ENCODE measurements at regions of chr18 and their contacts with region 1.

Region 1: DNA sequence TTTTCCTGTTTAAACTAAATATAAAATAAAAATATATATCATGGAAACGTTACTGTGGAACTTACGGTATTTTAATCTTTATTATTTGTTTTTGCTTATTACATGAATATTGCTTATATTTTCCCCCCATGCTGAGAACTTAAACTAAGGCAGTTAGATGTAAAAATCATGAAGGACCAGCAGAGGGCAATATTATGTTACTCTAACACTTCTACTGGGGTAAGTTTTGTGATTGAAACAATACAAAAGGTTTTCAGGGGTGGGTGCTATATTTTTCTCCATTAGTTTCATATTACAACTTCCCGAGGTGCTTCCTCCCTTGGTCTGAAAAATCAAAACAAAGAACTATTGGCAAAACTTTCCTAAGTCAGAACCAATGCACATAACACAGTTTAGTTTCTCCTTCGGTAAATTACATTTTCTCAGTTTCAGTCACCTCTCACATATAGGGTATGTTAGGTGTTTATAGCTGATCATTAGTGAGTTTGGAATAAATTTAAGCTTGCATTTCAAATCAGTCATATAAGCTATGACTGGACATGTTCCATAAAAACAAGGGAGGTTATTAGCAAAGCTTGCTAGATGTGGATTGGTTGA is 54.8 kb downstream of the ZNF407 start:
- DNase-seq: peak; percentile 66
- ATAC-seq: peak; percentile 75
- H3K4me3 ChIP-seq: no peak overlapping the region
- H3K27ac ChIP-seq: no peak overlapping the region
- H3K4me1 ChIP-seq: peaks cover 6% of the 10 kb centered on the region
- H3K27me3 ChIP-seq: no peaks in the 10 kb centered on the region
- CTCF ChIP-seq: peak; percentile 73
- POLR2A ChIP-seq: no peak
- RAD21 ChIP-seq: peak; percentile 77

Region 2: DNA sequence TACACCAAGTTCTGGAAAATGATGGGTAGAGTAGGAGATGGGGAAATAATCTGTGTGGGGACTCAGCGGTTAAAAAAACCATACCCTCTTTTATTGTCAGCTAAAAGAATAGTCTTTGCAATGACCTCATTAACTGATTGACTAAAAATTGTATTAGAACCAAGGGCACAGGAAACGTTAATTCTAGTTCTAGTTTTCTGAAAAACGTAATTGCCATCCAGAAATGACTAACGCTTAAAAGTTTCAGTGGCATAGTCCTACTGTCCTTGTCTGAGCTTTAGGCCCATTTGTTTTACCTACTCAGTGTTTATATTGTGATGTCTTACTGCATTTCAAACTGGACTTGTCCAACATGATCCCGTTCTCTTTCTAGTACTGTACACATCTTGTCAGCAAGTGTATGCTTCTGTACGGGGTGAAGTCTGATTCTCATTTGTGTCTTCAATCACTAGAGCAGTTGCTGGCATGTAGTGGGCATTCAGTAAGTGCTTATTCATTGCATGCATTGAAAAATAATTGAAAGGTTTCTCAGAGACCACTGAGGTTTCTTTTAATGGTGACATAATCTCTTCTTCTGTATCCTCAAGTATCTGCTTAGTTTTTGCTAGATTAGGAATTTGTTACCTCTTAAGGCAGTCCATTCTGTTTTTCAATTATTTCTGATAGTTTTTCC is 26.7 kb after region 1 on chr18:
- CTCF ChIA-PET with region 1: no interaction called
- POLR2A ChIA-PET with region 1: no interaction called
- dilution Hi-C with region 1: no loop called
- in situ Hi-C with region 1: no loop called
- intact Hi-C with region 1: no loop called
- DNase-seq: no peak
- ATAC-seq: no peak
- H3K4me3 ChIP-seq: no peak overlapping the region
- H3K27ac ChIP-seq: no peak overlapping the region
- H3K4me1 ChIP-seq: 0 out of 2 replicates have a peak, but pooled peaks cover 2% of the 10 kb centered on the region
- H3K27me3 ChIP-seq: no peaks in the 10 kb centered on the region
- CTCF ChIP-seq: no peak
- POLR2A ChIP-seq: no peak
- RAD21 ChIP-seq: no peak

Region 3: GRCh38 chr18:74880706-74881278 is 228.3 kb after region 1 on chr18:
- CTCF ChIA-PET with region 1: no interaction called
- POLR2A ChIA-PET with region 1: no interaction called
- dilution Hi-C with region 1: no loop called
- in situ Hi-C with region 1: no loop called
- intact Hi-C with region 1: no loop called
- DNase-seq: no peak
- ATAC-seq: no peak
- H3K4me3 ChIP-seq: no peak overlapping the region
- H3K27ac ChIP-seq: no peak overlapping the region
- H3K4me1 ChIP-seq: no peaks in the 10 kb centered on the region
- H3K27me3 ChIP-seq: no peaks in the 10 kb centered on the region
- CTCF ChIP-seq: no peak
- POLR2A ChIP-seq: no peak
- RAD21 ChIP-seq: no peak

Region 4: GRCh38 chr18:74963820-74964446 is 311.4 kb after region 1 on chr18:
- CTCF ChIA-PET with region 1: no interaction called
- POLR2A ChIA-PET with region 1: no interaction called
- dilution Hi-C with region 1: no loop called
- in situ Hi-C with region 1: no loop called
- intact Hi-C with region 1: loop called (anchors 1 kb)
- DNase-seq: peak; percentile 56
- ATAC-seq: peak; percentile 69
- H3K4me3 ChIP-seq: no peak overlapping the region
- H3K27ac ChIP-seq: no peak overlapping the region
- H3K4me1 ChIP-seq: no peaks in the 10 kb centered on the region
- H3K27me3 ChIP-seq: no peaks in the 10 kb centered on the region
- CTCF ChIP-seq: peak; percentile 51
- POLR2A ChIP-seq: no peak
- RAD21 ChIP-seq: peak; percentile 52

Region 5: DNA sequence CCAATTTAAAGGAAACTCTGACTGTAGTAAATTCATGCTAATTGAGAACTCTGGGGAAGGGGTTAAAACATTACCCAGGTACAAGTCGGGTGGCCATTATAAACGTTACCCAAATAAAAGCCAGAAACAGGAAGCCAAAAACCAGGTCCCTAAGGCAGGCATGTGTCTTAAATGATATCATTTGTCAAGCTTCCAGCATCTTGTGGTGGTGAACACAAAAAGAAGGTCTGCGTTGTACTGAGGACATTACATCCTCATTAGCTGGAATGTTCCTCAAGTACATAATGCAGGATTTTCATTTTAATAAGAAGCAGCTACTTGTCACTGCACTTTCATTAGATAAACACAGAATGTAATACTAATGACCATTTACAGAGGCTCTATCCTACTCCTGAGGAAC is 545.5 kb after region 1 on chr18:
- CTCF ChIA-PET with region 1: no interaction called
- POLR2A ChIA-PET with region 1: no interaction called
- dilution Hi-C with region 1: no loop called
- in situ Hi-C with region 1: loop called (anchors 5 kb)
- intact Hi-C with region 1: no loop called
- DNase-seq: peak; percentile 27
- ATAC-seq: no peak
- H3K4me3 ChIP-seq: no peak overlapping the region
- H3K27ac ChIP-seq: no peak overlapping the region
- H3K4me1 ChIP-seq: peaks cover 7% of the 10 kb centered on the region
- H3K27me3 ChIP-seq: no peaks in the 10 kb centered on the region
- CTCF ChIP-seq: no peak
- POLR2A ChIP-seq: no peak
- RAD21 ChIP-seq: no peak

Region 6: DNA sequence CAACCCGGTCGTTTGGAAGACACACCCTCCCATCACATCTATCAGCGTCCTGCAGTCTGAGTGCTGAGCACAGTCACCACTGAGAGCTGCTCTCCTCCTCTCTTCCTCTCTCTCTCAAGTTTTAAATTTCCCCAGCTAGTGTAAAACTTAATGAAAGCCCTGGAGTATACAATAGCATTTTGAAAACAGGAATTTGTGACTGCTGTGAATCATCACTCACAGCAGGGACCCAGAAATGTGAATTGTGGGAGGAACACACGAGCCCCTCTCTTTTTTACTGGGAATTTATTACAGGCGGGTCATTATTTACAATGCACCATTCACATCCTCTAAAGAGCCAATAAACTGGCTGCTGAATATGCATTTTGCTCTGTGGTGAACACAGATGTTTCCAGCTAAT is 960.0 kb after region 1 on chr18:
- CTCF ChIA-PET with region 1: no interaction called
- POLR2A ChIA-PET with region 1: no interaction called
- dilution Hi-C with region 1: no loop called
- in situ Hi-C with region 1: no loop called
- intact Hi-C with region 1: loop called (anchors 10 kb)
- DNase-seq: no peak
- ATAC-seq: no peak
- H3K4me3 ChIP-seq: no peak overlapping the region
- H3K27ac ChIP-seq: no peak overlapping the region
- H3K4me1 ChIP-seq: no peaks in the 10 kb centered on the region
- H3K27me3 ChIP-seq: no peaks in the 10 kb centered on the region
- CTCF ChIP-seq: no peak
- POLR2A ChIP-seq: no peak
- RAD21 ChIP-seq: no peak

Region 7: DNA sequence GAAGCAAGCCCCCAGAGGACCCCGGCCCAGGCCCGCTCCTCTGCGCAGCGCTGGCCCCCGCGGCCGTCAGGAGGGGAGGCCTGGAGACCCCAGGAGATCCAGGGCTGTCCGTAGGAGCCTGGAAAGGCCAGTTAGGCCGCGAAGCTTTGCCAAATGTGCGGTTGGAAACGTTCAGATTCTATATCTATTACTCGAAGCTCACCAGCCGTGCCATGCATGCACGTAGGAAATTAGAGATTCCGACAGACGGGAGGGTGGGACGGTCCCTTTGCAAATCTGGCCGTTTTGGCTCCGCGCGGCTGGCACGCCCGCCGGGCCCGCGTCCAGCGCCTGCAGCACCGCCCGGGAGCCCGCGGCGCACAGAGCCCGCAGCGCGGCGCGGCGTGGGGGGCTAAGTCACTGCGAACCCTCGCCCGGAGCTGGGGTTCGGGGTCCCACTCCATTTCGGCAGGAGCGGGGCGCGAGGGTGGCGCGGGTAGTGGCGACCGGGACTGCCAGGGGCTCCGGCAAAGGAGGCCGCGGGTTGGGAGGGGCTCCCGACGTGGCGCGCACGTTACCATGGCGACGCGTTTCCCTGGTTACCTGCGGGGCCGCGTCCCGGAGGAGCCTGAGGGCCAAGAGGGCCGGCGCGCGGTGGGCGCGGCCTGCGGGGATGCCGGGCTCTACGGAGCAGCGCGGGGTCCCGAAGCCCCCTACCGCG is 1263.6 kb after region 1 on chr18:
- CTCF ChIA-PET with region 1: no interaction called
- POLR2A ChIA-PET with region 1: no interaction called
- dilution Hi-C with region 1: no loop called
- in situ Hi-C with region 1: no loop called
- intact Hi-C with region 1: no loop called
- DNase-seq: no peak
- ATAC-seq: no peak
- H3K4me3 ChIP-seq: no peak overlapping the region
- H3K27ac ChIP-seq: no peak overlapping the region
- H3K4me1 ChIP-seq: no peaks in the 10 kb centered on the region
- H3K27me3 ChIP-seq: no peaks in the 10 kb centered on the region; the same call in 1 of the 2 replicates
- CTCF ChIP-seq: no peak
- POLR2A ChIP-seq: no peak
- RAD21 ChIP-seq: no peak

Region 8: DNA sequence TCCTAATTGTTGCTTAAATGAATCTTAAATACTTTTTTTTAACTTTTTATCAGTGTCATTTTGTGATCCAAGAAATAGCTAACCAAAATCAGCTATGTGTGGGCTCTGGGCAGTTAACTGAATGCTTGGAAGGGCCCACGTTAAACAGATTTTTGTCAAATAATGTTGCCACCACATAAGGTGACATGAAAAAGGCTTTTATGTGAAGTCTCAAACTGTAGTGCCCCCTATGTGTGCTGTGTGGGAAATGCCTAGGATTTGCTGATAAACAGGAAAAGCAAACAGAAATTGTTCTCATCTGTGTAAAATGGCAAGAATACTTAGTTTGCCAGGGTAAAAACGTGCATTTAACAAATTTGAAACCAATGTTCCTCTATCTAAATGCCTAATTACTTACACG is 1600.4 kb after region 1 on chr18:
- CTCF ChIA-PET with region 1: no interaction called
- POLR2A ChIA-PET with region 1: no interaction called
- dilution Hi-C with region 1: no loop called
- in situ Hi-C with region 1: loop called (anchors 25 kb)
- intact Hi-C with region 1: loop called (anchors 1 kb)
- DNase-seq: peak; percentile 6
- ATAC-seq: no peak
- H3K4me3 ChIP-seq: no peak overlapping the region
- H3K27ac ChIP-seq: no peak overlapping the region
- H3K4me1 ChIP-seq: no peaks in the 10 kb centered on the region
- H3K27me3 ChIP-seq: peaks cover 6% of the 10 kb centered on the region
- CTCF ChIP-seq: peak; percentile 43; the same call in 1 of the 2 replicates
- POLR2A ChIP-seq: no peak
- RAD21 ChIP-seq: peak; percentile 36

Region 9: DNA sequence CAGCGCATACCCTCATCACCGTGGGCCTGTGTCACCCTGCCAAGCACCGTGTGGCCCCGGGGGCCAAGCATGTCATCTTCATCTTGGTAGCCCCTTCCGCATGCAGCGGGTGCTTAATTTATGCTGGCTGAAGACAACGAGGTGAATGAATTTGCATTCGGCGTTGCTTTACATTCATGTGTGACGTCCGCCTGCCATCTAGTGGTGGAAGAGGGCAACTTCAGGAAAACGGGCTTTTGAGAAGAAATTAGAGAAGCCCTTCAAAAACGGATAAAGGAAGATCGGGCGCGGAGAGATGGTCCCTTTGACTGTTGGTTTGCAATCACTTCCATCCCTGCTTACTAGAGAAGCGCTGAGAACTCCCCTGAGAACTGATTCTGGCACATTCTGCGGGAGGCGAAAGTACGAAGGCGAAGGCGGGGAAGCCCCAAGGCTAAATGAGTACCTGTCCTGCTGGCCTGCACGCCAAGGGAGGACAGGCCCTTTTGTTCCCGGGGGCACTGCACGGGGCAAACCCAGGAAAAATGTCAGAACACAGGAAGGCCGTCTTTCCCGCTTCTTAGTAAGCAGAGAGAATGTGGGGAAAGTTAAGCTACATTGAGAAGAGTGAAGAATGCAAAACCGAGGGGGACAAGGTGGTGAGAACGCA is 1696.7 kb after region 1 on chr18:
- CTCF ChIA-PET with region 1: no interaction called
- POLR2A ChIA-PET with region 1: no interaction called
- dilution Hi-C with region 1: no loop called
- in situ Hi-C with region 1: loop called (anchors 10 kb)
- intact Hi-C with region 1: loop called (anchors 1 kb)
- DNase-seq: peak; percentile 67
- ATAC-seq: peak; percentile 40
- H3K4me3 ChIP-seq: no peak overlapping the region
- H3K27ac ChIP-seq: no peak overlapping the region
- H3K4me1 ChIP-seq: peaks cover under 1% of the 10 kb centered on the region; the same call in 1 of the 2 replicates
- H3K27me3 ChIP-seq: no peaks in the 10 kb centered on the region
- CTCF ChIP-seq: peak; percentile 88
- POLR2A ChIP-seq: no peak
- RAD21 ChIP-seq: peak; percentile 89